Activated CD4-positive, alpha-beta memory T cell treated with anti-CD3 and anti-CD28 coated beads, Interleukin-2, amount 10 ng/mL, durations not matched to agents 7 days and 5 days (primary cell): ENCODE measurements at regions of chr22 and their contacts with region 1.

Region 1: DNA sequence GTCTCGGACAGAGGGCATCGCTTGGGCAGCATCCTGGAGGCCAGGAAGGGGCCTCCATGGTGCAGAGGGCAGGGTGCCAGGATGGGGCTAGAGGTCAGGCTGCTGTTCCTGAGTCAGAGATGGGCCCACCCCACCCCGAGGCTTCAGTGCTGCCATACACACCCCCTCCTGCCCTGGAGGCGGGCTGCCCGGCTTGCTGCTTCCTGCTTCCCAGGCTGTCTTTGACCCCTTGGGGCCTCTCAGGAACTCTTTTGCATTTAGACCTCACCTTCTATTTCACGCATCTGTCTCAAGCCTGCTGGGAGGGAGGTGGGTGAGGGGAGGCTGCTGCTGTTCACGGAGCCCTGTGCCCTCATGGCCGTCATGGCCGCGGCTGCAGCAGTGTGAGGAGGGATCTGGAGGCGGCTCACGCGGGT is 6.6 kb upstream of the GRAMD4 start:
- DNase-seq: no peak
- H3K4me3 Mint-ChIP-seq: peak overlapping the region; percentile 81
- H3K27ac Mint-ChIP-seq: peak overlapping the region; percentile 95
- H3K4me1 Mint-ChIP-seq: peaks cover 28% of the 10 kb centered on the region
- H3K27me3 Mint-ChIP-seq: no peaks in the 10 kb centered on the region

Region 2: DNA sequence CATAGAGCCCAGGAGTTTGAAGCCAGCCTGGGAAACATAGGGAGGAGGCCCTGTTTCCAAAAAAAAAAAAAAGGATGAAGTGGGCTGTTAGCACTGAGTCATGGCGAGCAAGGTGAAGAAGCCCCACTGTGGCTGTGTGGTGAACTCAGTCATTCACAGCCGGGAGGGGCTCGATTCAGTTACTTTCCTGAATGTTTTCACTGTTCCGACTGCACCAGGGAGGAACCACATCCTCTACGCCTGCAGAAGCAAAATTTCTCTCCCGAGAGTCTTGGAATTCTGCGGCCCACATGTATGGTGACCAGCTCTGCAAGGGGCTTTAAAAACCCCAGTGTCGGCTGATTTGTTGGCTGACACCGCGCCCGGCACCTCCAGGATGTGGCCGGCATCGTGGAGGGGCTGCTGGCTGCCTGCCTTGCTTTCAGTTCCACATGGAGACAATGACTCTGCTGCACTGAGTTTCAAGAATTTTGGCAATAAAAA is 21.2 kb before region 1 on chr22:
- CTCF ChIA-PET with region 1: interaction called, 3 read pairs
- POLR2A ChIA-PET with region 1: interaction called, 17 read pairs
- DNase-seq: peak; percentile 77
- H3K4me3 Mint-ChIP-seq: peak overlapping the region; percentile 51
- H3K27ac Mint-ChIP-seq: peak overlapping the region; percentile 83
- H3K4me1 Mint-ChIP-seq: peaks cover 52% of the 10 kb centered on the region
- H3K27me3 Mint-ChIP-seq: no peaks in the 10 kb centered on the region